ENCODE measurements at regions of chr5 and their contacts with region 1.

Region 1: GRCh38 chr5:174311531-174312269 is 266.2 kb downstream of the NSG2 start:
- DNase-seq: peak; percentile 69 to 82
- ATAC-seq: peak; percentile 66 to 84 (median 78)
- H3K4me3 ChIP-seq: peak overlapping the region; percentile 65
- H3K27ac ChIP-seq: no peak overlapping the region
- H3K4me1 ChIP-seq: peaks cover 7% of the 10 kb centered on the region
- H3K27me3 ChIP-seq: peaks cover 0 to 2% (median 0%) of the 10 kb centered on the region in 3 donors
- CTCF ChIP-seq: peak; percentile 88

Region 2: GRCh38 chr5:174045470-174046025 is 266.2 kb before region 1 on chr5 and contains the start of gene NSG2:
- intact Hi-C with region 1: loop called (anchors 1 to 2 kb)
- DNase-seq: peak; percentile 72 to 85
- ATAC-seq: peak; percentile 80 to 97 (median 96)
- H3K4me3 ChIP-seq: no peak within 1 kb of the TSS
- H3K27ac ChIP-seq: no peak within 1 kb of the TSS
- H3K4me1 ChIP-seq: no peaks in the 10 kb centered on the region
- H3K27me3 ChIP-seq: no peaks in the 10 kb centered on the region
- CTCF ChIP-seq: peak; percentile 41
- total RNA-seq, gene NSG2: 0.16 TPM in 1 of 4 donors, not detected in the others